CD4-positive, alpha-beta memory T cell (primary cell): ENCODE measurements at regions of chr6 and their contacts with region 1.

Region 1: GRCh38 chr6:107847844-107848802 is 24.0 kb upstream of the SCML4 start:
- DNase-seq: peak; percentile 71 to 83 (median 75)
- H3K4me3 ChIP-seq: peak overlapping the region; percentile 57 to 73
- H3K4me3 Mint-ChIP-seq: peak overlapping the region; percentile 79 to 90 (median 85)
- H3K27ac ChIP-seq: peak overlapping the region; percentile 33
- H3K27ac Mint-ChIP-seq: peak overlapping the region; percentile 80 to 90 (median 88)
- H3K4me1 ChIP-seq: peaks cover 22% of the 10 kb centered on the region
- H3K4me1 Mint-ChIP-seq: peaks cover 17 to 43% (median 23%) of the 10 kb centered on the region in 4 donors
- H3K27me3 ChIP-seq: no peaks in the 10 kb centered on the region
- H3K27me3 Mint-ChIP-seq: no peaks in the 10 kb centered on the region

Region 2: DNA sequence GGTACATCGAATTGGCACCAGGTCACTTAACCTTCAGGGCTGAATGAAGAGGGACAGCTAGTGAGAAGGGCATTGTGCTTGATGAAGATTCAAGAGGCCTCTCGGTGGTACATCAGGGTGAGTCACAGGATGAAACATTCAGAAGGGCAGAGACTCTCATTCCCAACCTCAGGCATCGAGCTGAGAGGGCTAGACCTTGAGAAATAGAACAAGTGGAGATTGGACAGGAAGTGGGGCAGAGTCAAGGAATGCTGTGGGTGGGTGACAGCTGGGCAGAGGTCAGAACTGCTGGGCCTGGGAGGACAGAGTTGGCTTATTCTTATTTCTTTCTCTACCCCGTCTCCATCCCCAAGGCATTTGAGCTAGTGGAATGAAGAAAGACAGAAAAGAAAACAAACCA is 150.0 kb before region 1 on chr6:
- CTCF ChIA-PET with region 1: interaction called, 56 read pairs
- POLR2A ChIA-PET with region 1: interaction called, 4 read pairs
- intact Hi-C with region 1: no loop called
- DNase-seq: no peak
- H3K4me3 ChIP-seq: no peak overlapping the region
- H3K4me3 Mint-ChIP-seq: no peak overlapping the region
- H3K27ac ChIP-seq: no peak overlapping the region
- H3K27ac Mint-ChIP-seq: peak overlapping the region in 1 of 7 donors; percentile 25
- H3K4me1 ChIP-seq: peaks cover 5% of the 10 kb centered on the region
- H3K4me1 Mint-ChIP-seq: peaks cover 11 to 26% (median 19%) of the 10 kb centered on the region in 4 donors
- H3K27me3 ChIP-seq: no peaks in the 10 kb centered on the region
- H3K27me3 Mint-ChIP-seq: no peaks in the 10 kb centered on the region

Region 3: GRCh38 chr6:107731422-107732319 is 116.5 kb before region 1 on chr6:
- CTCF ChIA-PET with region 1: interaction called, 224 read pairs
- POLR2A ChIA-PET with region 1: interaction called, 70 read pairs
- intact Hi-C with region 1: loop called (anchors 1 kb)
- DNase-seq: peak; percentile 43 to 61 (median 46)
- H3K4me3 ChIP-seq: peak overlapping the region; percentile 71 to 88
- H3K4me3 Mint-ChIP-seq: peak overlapping the region; percentile 91 to 99 (median 96)
- H3K27ac ChIP-seq: peak overlapping the region; percentile 84
- H3K27ac Mint-ChIP-seq: peak overlapping the region; percentile 79 to 97 (median 92)
- H3K4me1 ChIP-seq: peaks cover 90% of the 10 kb centered on the region
- H3K4me1 Mint-ChIP-seq: peaks cover 53 to 96% (median 73%) of the 10 kb centered on the region in 4 donors
- H3K27me3 ChIP-seq: no peaks in the 10 kb centered on the region
- H3K27me3 Mint-ChIP-seq: no peaks in the 10 kb centered on the region

Region 4: GRCh38 chr6:107763946-107764345 is 84.2 kb before region 1 on chr6:
- CTCF ChIA-PET with region 1: interaction called, 12 read pairs
- POLR2A ChIA-PET with region 1: interaction called, 3 read pairs
- intact Hi-C with region 1: no loop called
- DNase-seq: no peak
- H3K4me3 ChIP-seq: no peak overlapping the region
- H3K4me3 Mint-ChIP-seq: no peak overlapping the region
- H3K27ac ChIP-seq: no peak overlapping the region
- H3K27ac Mint-ChIP-seq: peak overlapping the region in 2 of 7 donors; percentile 42 to 47
- H3K4me1 ChIP-seq: no peaks in the 10 kb centered on the region
- H3K4me1 Mint-ChIP-seq: peaks cover 10 to 24% (median 15%) of the 10 kb centered on the region in 4 donors
- H3K27me3 ChIP-seq: no peaks in the 10 kb centered on the region
- H3K27me3 Mint-ChIP-seq: no peaks in the 10 kb centered on the region

Region 5: GRCh38 chr6:107793191-107793590 is 54.9 kb before region 1 on chr6:
- CTCF ChIA-PET with region 1: interaction called, 48 read pairs
- POLR2A ChIA-PET with region 1: interaction called, 9 read pairs
- intact Hi-C with region 1: no loop called
- DNase-seq: peak in 1 of 5 donors; percentile 28
- H3K4me3 ChIP-seq: no peak overlapping the region
- H3K4me3 Mint-ChIP-seq: peak overlapping the region in 7 of 8 donors; percentile 4 to 72 (median 49)
- H3K27ac ChIP-seq: no peak overlapping the region
- H3K27ac Mint-ChIP-seq: peak overlapping the region; percentile 26 to 95 (median 88)
- H3K4me1 ChIP-seq: peaks cover 94% of the 10 kb centered on the region
- H3K4me1 Mint-ChIP-seq: peaks cover 68 to 91% (median 80%) of the 10 kb centered on the region in 4 donors
- H3K27me3 ChIP-seq: no peaks in the 10 kb centered on the region
- H3K27me3 Mint-ChIP-seq: no peaks in the 10 kb centered on the region

Region 6: DNA sequence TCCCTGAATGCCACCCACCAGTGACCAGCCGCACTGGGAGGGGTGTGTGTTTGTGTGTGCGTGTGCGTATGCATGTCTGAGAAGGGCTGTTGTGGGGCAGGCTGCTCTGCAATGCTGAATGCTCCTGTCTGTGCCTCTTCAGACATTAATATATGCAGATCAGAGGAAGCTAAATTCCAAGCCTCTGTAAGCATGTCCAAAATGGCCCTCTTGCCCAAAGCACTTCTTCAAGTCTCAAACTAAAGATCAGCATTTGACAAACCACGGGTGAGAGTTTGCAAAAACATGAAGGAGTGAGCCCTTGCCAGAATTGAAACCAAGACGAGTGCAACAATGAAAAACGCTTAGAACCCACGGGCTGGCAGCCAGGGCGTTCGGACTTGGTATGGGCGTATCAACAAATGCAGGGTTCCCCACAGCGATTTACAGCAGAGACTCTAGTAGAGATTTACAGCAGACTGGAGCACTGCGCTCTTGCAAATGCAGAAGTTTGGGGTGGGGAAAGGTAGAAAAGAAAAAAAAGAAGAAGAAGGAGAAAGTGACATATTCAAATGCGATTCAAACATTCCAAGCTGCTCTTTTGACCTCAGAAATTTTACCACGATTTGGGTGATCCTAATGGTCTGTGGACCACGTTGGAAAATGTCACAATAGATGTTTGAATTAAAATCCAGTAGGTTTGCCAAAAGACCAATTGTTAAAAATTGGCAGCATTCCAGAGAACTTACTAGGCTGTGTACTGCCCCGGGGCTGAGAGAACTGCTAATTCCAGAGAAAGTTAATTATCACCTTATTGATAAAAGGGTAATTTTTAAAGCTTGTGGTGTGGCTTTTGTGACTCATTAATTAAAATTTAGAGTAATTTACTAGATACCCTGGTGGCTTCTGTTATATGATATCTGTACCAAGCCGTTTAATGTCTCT is 27.5 kb before region 1 on chr6:
- CTCF ChIA-PET with region 1: interaction called, 140 read pairs
- POLR2A ChIA-PET with region 1: interaction called, 107 read pairs
- intact Hi-C with region 1: loop called (anchors 1 kb)
- DNase-seq: peak; percentile 42 to 59 (median 46)
- H3K4me3 ChIP-seq: peak overlapping the region; percentile 26 to 68
- H3K4me3 Mint-ChIP-seq: peak overlapping the region; percentile 94 to 98 (median 96)
- H3K27ac ChIP-seq: peak overlapping the region; percentile 97
- H3K27ac Mint-ChIP-seq: peak overlapping the region; percentile 99 to 100 (median 99)
- H3K4me1 ChIP-seq: peaks cover 71% of the 10 kb centered on the region
- H3K4me1 Mint-ChIP-seq: peaks cover 57 to 89% (median 72%) of the 10 kb centered on the region in 4 donors
- H3K27me3 ChIP-seq: no peaks in the 10 kb centered on the region
- H3K27me3 Mint-ChIP-seq: peaks cover 0 to 3% of the 10 kb centered on the region in 2 donors